ENCODE measurements at regions of chr10 and their contacts with region 1.

Region 1: GRCh38 chr10:100508691-100509150 is 10.9 kb downstream of the SEC31B start:
- DNase-seq: peak; percentile 47
- H3K4me3 ChIP-seq: no peak overlapping the region
- H3K27ac ChIP-seq: no peak overlapping the region
- H3K4me1 ChIP-seq: peaks cover 32% of the 10 kb centered on the region
- H3K27me3 ChIP-seq: no peaks in the 10 kb centered on the region
- CTCF ChIP-seq: peak; percentile 77 to 79

Region 2: DNA sequence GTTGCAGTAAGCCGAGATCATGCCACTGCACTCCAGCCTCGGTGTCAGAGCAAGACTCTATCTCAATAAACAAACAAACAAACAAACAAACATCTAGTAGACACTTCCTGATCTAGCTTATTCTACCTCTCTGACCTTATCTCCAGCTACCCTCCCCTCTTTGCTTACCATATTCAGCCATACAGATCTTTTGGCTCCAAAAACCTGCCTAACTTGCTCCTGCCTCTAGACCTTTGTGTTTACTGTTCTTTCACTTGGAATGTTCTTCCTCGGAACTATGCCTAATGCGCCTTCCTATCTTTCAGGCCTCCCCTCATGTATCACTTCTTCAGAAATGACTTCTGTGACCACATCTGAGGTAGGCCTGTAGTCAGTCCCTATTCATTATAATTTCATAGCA is 66.2 kb before region 1 on chr10:
- CTCF ChIA-PET with region 1: no interaction called
- dilution Hi-C with region 1: no loop called
- in situ Hi-C with region 1: loop called in 1 of 2 experiments (anchors 5 kb)
- intact Hi-C with region 1: no loop called
- DNase-seq: no peak
- H3K4me3 ChIP-seq: no peak overlapping the region
- H3K27ac ChIP-seq: no peak overlapping the region
- H3K4me1 ChIP-seq: no peaks in the 10 kb centered on the region
- H3K27me3 ChIP-seq: no peaks in the 10 kb centered on the region
- CTCF ChIP-seq: no peak

Region 3: GRCh38 chr10:100659361-100660098 is 150.8 kb after region 1 on chr10:
- CTCF ChIA-PET with region 1: no interaction called
- dilution Hi-C with region 1: no loop called
- in situ Hi-C with region 1: no loop called
- intact Hi-C with region 1: no loop called
- DNase-seq: no peak
- H3K4me3 ChIP-seq: no peak overlapping the region
- H3K27ac ChIP-seq: no peak overlapping the region
- H3K4me1 ChIP-seq: peaks cover 15% of the 10 kb centered on the region
- H3K27me3 ChIP-seq: peaks cover 47% of the 10 kb centered on the region
- CTCF ChIP-seq: no peak

Region 4: DNA sequence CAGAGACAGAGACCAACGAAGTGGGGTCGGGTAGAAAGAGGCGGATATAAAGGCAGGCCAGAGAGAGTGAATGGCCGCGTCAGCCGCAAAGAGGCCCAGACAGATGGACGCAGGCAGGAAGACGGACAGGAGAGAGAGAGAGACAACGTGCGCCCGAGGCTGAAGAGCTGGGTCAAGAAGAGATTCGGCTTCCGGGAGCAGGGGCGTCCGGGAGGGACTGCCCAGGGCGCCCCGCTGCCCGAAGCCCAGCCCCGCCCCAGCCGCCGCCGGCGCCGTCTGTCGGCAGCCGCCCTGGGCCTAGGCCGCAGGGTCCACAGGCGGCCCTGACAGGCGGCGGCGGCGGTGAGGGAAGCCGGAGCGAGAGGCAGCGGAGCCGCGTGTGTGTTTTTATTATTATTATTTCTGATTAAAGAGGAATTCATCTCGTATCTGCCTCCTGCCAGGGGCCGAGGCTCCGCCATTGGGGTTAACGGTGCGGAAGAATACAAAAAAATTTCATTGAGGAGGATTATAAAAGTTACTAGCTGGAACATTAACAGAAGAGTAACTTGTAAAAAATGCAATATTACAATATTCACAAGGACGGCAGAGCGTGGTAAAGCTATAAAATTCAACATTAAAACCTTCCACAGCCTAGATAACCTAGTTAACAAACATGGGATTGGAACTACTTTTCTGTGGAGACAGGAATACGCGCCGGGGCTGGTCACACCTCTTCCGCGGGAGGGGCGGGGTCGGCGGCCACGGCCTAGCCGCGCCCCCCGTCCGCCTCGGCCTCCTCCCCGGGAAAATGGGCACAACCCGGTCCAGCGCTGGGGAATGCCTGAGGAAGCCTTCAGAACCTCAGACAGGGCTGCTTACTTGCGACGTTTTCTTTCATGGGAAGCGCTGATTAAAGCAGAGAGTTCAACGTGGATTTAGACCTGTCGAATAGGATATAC is 207.0 kb after region 1 on chr10:
- CTCF ChIA-PET with region 1: no interaction called
- dilution Hi-C with region 1: no loop called
- in situ Hi-C with region 1: no loop called
- intact Hi-C with region 1: no loop called
- DNase-seq: no peak
- H3K4me3 ChIP-seq: no peak overlapping the region
- H3K27ac ChIP-seq: no peak overlapping the region
- H3K4me1 ChIP-seq: no peaks in the 10 kb centered on the region
- H3K27me3 ChIP-seq: peaks cover 39% of the 10 kb centered on the region
- CTCF ChIP-seq: no peak

Region 5: DNA sequence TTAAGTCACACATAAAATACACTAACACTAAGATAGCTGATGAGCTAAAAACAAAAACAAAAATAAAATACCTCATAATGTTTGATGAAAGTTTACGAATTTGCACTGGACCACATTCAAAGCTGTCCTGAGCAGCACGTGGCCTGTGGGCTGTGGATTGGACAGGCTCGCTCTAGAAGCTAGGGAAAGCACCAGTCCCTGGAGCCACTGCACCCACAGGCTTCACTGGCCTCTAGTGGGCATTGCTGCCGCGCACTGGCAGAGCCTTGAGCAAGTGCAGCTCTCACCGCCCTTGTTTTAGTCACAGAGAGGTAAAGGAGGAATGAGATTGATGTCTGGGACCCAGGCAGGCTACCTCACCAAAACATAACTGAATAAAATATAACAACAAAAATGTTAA is 304.3 kb after region 1 on chr10:
- CTCF ChIA-PET with region 1: no interaction called
- dilution Hi-C with region 1: no loop called
- in situ Hi-C with region 1: no loop called
- intact Hi-C with region 1: no loop called
- DNase-seq: no peak
- H3K4me3 ChIP-seq: no peak overlapping the region
- H3K27ac ChIP-seq: no peak overlapping the region
- H3K4me1 ChIP-seq: no peaks in the 10 kb centered on the region
- H3K27me3 ChIP-seq: peaks cover 3% of the 10 kb centered on the region
- CTCF ChIP-seq: no peak

Region 6: DNA sequence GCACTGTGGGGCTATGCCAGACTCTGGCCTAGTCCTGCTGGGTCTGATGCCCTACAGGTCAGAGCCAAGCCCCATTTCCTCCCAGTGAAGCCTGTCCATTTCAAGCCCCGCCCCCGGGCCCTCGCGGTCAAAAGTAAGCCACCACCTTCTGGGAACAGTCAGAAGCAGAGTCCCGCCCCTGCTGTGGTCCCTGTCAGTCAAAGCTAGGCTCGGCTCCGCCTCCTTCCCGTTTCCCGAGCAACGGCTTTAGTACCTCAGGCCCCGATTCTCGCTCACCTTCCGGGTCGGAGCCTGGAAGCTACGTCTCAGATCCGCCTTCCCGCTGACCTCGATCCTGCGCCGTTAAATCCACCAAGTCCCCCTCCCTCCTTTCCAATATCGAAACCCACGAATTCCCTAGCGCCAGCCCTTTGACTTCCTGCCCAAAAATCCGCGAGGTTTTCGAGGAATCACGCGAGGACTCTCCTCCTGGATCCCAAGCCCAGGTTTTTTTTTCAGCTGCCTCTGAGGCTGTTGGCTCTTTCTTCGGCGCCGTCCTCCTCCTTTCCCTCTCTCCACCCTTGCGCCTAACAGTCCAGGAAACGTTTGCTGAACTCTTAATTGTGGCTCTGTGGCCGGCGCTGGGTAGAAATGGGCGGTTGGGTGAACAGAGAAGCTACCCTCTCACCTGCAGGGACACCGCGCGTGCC is 534.1 kb after region 1 on chr10:
- CTCF ChIA-PET with region 1: no interaction called
- dilution Hi-C with region 1: no loop called
- in situ Hi-C with region 1: no loop called
- intact Hi-C with region 1: no loop called
- DNase-seq: peak; percentile 96
- H3K4me3 ChIP-seq: peak overlapping the region; percentile 44 to 56 (median 54)
- H3K27ac ChIP-seq: peak overlapping the region; percentile 86
- H3K4me1 ChIP-seq: peaks cover 39% of the 10 kb centered on the region
- H3K27me3 ChIP-seq: no peaks in the 10 kb centered on the region
- CTCF ChIP-seq: no peak

Measured in mammary epithelial cell (primary cell).